ENCODE measurements at regions of chrX and their contacts with region 1.

Region 1: GRCh38 chrX:131841496-131842410 is 181.3 kb upstream of the STK26 start:
- DNase-seq: peak in 1 of 2 donors; percentile 33
- ATAC-seq: peak; percentile 74

Region 2: DNA sequence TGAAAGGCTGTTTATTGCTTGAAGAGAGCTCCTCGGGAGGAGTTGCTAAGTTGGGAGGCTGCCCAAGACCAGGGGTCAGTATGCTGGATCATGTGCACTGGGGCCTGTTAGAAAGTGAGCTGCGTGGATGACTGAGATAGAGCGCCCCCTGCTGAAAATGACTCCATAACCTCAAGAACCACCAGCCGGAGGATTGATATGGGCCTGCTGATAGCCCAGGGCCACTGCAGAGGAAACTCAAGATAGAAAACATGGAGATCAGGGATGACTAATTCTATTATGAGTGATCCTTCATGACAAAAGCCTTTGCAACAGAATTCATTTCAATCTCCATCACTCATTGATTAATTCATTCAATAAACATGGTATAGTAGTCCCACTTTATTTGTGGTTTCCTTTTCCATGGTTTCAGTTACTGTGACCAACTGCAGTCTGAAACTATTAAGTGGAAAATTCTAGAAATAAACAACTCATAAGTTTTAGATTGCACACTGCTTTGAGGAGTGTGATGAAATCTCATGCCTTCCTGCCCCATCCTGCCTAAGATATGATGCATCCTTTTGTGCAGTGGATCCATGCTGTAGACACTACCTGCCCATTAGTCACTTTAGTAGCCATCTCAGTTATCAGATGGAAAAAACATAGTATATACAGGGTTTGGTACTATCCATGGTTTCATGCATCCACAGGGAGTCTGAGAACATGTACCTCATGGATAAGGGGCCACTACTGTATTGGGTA is 773.8 kb after region 1 on chrX:
- intact Hi-C with region 1: loop called in 1 of 2 experiments (anchors 10 kb)
- DNase-seq: peak in 1 of 2 donors; percentile 61
- ATAC-seq: peak; percentile 68

Measured in left colon (tissue), 2 donors.